HepG2 (cell line): ENCODE measurements at regions of chr17 and their contacts with region 1.

Region 1: DNA sequence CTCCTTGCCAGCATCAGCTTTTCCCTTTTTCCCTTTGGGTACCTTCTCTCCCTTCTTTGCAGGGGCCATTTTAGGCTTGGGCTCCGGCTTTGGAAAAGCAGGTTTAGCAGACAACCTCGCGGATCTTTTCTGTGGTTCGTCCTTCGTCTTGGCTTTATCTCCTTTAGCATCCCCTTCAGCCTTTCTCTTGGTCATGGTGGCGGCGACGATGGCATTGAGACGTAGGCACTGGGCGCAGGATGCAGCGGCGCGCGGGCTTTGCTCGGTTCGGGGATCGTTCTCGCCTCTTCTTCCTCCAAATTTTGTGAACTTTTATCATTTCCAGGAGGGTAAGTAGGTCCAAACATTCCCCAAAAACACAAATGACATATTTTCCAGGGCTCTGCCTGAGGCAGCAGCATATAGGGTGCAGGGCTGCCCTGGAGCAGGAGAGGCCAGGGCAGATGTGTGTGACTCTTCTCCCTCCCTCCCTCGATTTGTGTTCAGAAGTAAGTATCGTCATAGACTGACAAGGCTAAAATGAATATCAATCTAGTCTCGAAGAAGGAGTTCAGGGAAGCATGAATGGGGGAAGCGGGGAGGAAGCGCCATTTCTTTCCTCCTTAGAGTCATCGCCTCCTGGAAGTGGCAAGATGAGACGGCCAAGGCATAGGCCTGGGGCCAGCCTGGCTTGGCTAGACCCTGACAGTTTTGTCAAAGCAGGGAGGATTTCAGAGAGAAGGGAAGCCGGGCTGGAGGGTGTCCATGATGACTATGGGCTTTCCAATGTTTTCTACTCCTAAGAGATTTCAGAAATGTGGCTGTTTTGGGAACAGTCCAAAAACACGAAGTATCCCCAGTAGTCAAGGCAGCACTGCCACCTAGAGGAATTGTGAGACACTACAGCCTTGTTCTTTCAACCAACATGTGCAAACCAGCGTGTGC is 13.2 kb downstream of the CHCT1 start:
- DNase-seq: peak; percentile 86
- ATAC-seq: peak; percentile 68
- H3K4me3 ChIP-seq: no peak overlapping the region
- H3K27ac ChIP-seq: no peak overlapping the region
- H3K4me1 ChIP-seq: peaks cover 25% of the 10 kb centered on the region
- H3K27me3 ChIP-seq: no peaks in the 10 kb centered on the region; a peak in 1 of 5 replicates
- CTCF ChIP-seq: peak; percentile 97
- EP300 ChIP-seq: no peak
- POLR2A ChIP-seq: no peak
- RAD21 ChIP-seq: peak; percentile 92

Region 2: GRCh38 chr17:60142872-60143499 is 292.5 kb before region 1 on chr17:
- CTCF ChIA-PET with region 1: interaction called, 28 read pairs
- POLR2A ChIA-PET with region 1: no interaction called
- in situ Hi-C with region 1: no loop called
- intact Hi-C with region 1: loop called (anchors 1 kb)
- DNase-seq: peak; percentile 83
- ATAC-seq: peak; percentile 82
- H3K4me3 ChIP-seq: peak overlapping the region in 2 of 3 experiments; percentile 23 to 56; a peak in 3 of 6 replicates
- H3K27ac ChIP-seq: no peak overlapping the region
- H3K4me1 ChIP-seq: peaks cover 28% of the 10 kb centered on the region
- H3K27me3 ChIP-seq: peaks cover 11 to 72% of the 10 kb centered on the region in 2 experiments
- CTCF ChIP-seq: peak; percentile 91
- EP300 ChIP-seq: no peak
- POLR2A ChIP-seq: no peak
- RAD21 ChIP-seq: peak; percentile 91

Region 3: GRCh38 chr17:60163098-60163784 is 272.3 kb before region 1 on chr17:
- CTCF ChIA-PET with region 1: interaction called, 7 read pairs
- POLR2A ChIA-PET with region 1: no interaction called
- in situ Hi-C with region 1: loop called (anchors 10 kb)
- intact Hi-C with region 1: loop called (anchors 1 kb)
- DNase-seq: peak; percentile 52
- ATAC-seq: peak; percentile 85
- H3K4me3 ChIP-seq: peak overlapping the region; percentile 4 to 64 (median 16); a peak in 1 of 6 replicates
- H3K27ac ChIP-seq: no peak overlapping the region
- H3K4me1 ChIP-seq: peaks cover 38% of the 10 kb centered on the region
- H3K27me3 ChIP-seq: peaks cover 4 to 40% of the 10 kb centered on the region in 2 experiments; a peak in 2 of 5 replicates
- CTCF ChIP-seq: peak; percentile 81
- EP300 ChIP-seq: no peak
- POLR2A ChIP-seq: no peak
- RAD21 ChIP-seq: peak; percentile 34; the same call in 1 of the 2 replicates

Region 4: DNA sequence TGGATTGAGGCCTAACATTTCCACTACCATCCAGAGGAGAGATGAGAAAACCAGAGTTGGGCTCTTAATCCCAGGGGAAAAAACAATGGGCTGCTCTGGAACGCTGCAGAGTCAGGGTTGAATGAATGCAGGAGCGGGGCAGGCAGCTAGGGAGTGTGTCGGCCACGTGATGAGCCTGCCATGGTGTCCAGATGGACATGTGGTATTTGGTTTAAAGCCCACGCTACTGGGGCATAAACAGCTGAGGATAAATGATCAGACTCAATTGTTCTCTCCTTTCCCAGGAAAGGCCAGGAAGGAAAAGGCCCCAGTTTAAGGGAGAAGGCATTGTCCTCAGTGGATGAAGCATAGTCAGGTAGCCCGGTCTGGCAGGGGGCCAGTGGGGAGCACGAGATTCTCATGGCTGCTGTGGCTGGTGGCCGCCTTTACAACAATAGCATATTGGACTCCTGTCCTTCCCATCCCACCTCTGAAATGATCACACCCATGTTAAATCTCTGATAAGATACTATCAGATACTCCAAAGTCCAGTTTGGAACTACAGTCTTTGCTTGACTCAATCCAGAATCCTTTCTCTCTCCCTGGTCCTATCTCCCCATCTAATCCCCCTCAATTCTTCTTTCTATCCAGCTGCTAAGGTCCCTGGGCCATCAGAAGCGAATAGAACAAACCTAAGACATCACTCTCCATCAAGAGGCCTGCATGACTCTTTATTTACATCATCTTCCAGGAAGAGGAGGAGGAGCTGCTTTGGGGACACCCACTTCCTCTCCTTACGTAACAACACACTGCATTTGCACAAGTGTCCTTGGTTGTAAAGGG is 265.4 kb before region 1 on chr17:
- CTCF ChIA-PET with region 1: no interaction called
- POLR2A ChIA-PET with region 1: no interaction called
- in situ Hi-C with region 1: loop called (anchors 10 kb)
- intact Hi-C with region 1: no loop called
- DNase-seq: peak; percentile 35
- ATAC-seq: no peak
- H3K4me3 ChIP-seq: no peak overlapping the region
- H3K27ac ChIP-seq: no peak overlapping the region
- H3K4me1 ChIP-seq: peaks cover 58% of the 10 kb centered on the region
- H3K27me3 ChIP-seq: 0 out of 5 replicates have a peak, but pooled peaks cover 0 to 3% of the 10 kb centered on the region in 2 experiments
- CTCF ChIP-seq: no peak
- EP300 ChIP-seq: no peak
- POLR2A ChIP-seq: no peak
- RAD21 ChIP-seq: no peak

Region 5: DNA sequence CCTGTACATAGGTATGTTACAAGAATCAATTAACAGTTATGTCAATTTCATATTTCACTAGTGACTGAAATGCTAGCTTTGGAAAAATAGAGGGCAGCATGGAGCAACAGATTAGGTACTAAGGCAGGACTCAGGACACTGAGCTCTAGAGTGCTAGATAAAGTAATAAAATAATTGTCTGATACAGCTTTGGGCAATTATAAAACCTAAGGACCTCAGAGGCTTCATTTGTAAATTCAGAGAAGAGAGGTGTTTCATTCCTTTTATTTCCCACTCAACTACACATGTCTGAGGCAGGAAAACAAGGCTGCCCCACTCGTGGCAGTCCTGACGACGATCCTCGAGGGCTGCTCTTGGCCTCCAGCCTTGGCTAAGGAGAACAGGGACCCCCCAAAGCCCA is 204.3 kb before region 1 on chr17:
- CTCF ChIA-PET with region 1: interaction called, 5 read pairs
- POLR2A ChIA-PET with region 1: no interaction called
- in situ Hi-C with region 1: no loop called
- intact Hi-C with region 1: loop called (anchors 1 kb)
- DNase-seq: peak; percentile 18
- ATAC-seq: peak; percentile 61
- H3K4me3 ChIP-seq: no peak overlapping the region
- H3K27ac ChIP-seq: no peak overlapping the region
- H3K4me1 ChIP-seq: no peaks in the 10 kb centered on the region
- H3K27me3 ChIP-seq: no peaks in the 10 kb centered on the region
- CTCF ChIP-seq: peak; percentile 45
- EP300 ChIP-seq: no peak
- POLR2A ChIP-seq: no peak
- RAD21 ChIP-seq: no peak

Region 6: DNA sequence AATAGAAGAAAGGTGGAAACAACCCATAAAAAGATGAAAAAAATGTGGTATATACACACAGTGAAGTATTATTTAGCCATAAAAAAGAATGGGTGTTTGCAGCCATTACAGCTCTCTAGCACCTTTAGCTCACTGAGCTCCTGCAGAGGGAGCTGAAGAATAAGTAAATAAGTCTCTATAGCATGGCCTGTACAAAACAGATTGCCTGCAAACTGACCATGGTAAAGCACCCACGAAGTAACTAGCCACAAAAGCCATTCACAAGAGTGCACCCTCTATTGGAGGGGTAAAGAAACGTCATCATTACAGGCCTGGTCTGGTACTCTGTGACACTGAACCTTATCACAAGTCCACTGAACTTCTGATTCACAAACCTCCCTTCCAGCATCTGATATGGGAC is 119.9 kb before region 1 on chr17:
- CTCF ChIA-PET with region 1: interaction called, 3 read pairs
- POLR2A ChIA-PET with region 1: no interaction called
- in situ Hi-C with region 1: no loop called
- intact Hi-C with region 1: loop called (anchors 10 kb)
- DNase-seq: peak; percentile 29
- ATAC-seq: peak; percentile 68
- H3K4me3 ChIP-seq: no peak overlapping the region
- H3K27ac ChIP-seq: no peak overlapping the region
- H3K4me1 ChIP-seq: peaks cover 11% of the 10 kb centered on the region
- H3K27me3 ChIP-seq: no peaks in the 10 kb centered on the region
- CTCF ChIP-seq: peak; percentile 56
- EP300 ChIP-seq: no peak
- POLR2A ChIP-seq: no peak
- RAD21 ChIP-seq: no peak

Region 7: DNA sequence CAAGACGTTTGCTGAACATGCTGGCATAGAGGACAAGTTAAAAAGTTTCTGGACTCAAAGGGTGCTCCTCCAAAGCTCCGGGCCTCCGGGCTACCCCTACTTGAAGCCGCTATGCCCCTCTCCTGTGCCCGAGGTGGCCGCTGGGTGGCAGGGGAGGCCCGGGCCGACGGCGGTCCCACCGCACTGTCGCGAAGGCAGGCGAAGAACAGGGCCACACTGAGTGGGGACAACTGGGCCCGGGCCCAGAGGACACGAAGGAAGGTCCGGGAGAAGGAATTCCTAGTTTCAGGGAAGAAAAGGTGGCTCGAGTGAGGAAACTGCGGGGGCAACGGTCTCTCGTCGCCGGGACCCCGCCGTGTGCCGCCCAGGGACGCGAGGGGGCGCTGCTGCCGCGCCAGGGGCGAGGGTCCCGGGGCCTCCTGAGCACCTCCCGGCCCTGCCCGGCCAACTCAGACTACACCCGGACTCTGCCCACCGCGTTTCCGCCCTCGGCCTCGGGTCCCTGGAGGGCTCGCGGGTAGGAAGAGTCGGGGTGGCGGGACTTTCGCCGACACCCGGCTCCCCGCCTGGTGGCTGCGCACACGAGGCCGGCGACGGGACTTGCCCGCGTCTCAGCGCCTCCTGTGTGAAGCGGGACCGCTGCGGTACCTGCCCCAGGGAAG is 14.1 kb before region 1 on chr17:
- CTCF ChIA-PET with region 1: interaction called, 12 read pairs
- POLR2A ChIA-PET with region 1: no interaction called
- in situ Hi-C with region 1: no loop called
- intact Hi-C with region 1: loop called (anchors 2 kb)
- DNase-seq: peak; percentile 42
- ATAC-seq: peak; percentile 97
- H3K4me3 ChIP-seq: peak overlapping the region; percentile 14 to 52 (median 27)
- H3K27ac ChIP-seq: no peak overlapping the region
- H3K4me1 ChIP-seq: peaks cover 12% of the 10 kb centered on the region; the same call in 1 of the 2 replicates
- H3K27me3 ChIP-seq: peaks cover 4 to 15% of the 10 kb centered on the region in 2 experiments; a peak in 4 of 5 replicates
- CTCF ChIP-seq: peak; percentile 93
- EP300 ChIP-seq: no peak
- POLR2A ChIP-seq: no peak
- RAD21 ChIP-seq: peak; percentile 84

Region 8: DNA sequence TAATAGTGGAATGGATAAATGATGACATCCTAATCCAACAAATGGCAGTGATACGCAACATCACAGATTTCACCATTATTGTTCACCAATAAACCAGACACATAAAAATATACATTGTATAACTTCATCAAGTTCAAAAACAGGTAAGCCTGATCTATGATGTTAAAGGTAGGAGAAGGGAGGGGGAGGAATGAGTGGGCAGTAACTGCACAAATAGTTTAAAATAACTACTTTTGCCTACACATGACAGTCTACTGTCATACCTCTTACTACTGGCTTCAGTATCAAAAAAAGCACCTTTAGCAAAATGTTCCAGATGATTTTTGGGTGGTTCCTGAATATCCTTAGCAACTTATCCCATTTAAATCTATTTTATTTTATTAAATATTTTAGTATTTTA is 15.6 kb after region 1 on chr17:
- CTCF ChIA-PET with region 1: no interaction called
- POLR2A ChIA-PET with region 1: no interaction called
- in situ Hi-C with region 1: no loop called
- intact Hi-C with region 1: no loop called
- DNase-seq: no peak
- ATAC-seq: no peak
- H3K4me3 ChIP-seq: no peak overlapping the region
- H3K27ac ChIP-seq: no peak overlapping the region
- H3K4me1 ChIP-seq: no peaks in the 10 kb centered on the region
- H3K27me3 ChIP-seq: no peaks in the 10 kb centered on the region
- CTCF ChIP-seq: no peak
- EP300 ChIP-seq: no peak
- POLR2A ChIP-seq: no peak
- RAD21 ChIP-seq: no peak